ENCODE measurements at regions of chr20 and their contacts with region 1.

Region 1: DNA sequence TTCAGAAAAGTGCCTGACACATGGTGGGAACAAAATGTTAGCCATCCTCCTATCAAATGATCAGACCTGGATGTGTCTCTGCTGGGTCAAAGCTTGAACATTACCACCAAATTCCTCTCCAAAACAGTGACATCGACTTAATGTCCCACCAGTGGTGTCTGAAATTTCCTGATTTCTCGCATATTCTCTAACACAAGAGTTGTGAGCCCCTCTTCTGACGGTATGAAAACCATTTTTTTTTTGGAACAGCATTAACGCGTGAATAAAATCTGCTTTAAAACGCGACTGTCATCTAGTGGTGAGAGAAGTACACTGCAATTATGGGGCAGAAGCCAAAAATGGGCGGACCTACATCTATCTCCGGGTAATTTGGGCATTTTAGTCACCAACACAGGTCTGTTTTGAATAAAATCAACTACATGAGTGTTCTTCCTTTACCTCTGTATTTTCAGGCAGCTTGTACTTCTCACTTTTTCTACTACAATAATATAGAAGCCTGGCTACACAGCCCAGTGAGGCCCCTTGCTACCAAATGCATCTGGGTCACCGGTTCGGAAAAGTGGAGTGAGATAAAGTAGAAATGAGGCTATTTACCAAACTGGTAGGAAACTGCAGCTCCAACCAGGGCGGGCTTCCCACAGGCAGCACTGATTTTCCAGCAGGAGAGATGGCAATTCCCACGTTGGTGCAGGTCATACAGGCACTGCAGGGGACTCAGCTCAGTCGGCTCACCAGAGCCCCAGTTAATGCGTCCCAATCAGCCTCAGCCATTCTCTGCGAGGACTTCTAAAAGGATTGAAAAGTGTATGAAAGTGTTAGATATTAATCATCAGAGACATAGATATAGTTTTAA is 27.4 kb downstream of the MGME1 start:
- DNase-seq: peak; percentile 70
- ATAC-seq: peak; percentile 72
- H3K4me3 ChIP-seq: peak overlapping the region in 2 of 3 experiments; percentile 7 to 30; a peak in 2 of 6 replicates
- H3K27ac ChIP-seq: no peak overlapping the region
- H3K4me1 ChIP-seq: peaks cover 28% of the 10 kb centered on the region
- H3K27me3 ChIP-seq: peaks cover 2 to 23% of the 10 kb centered on the region in 2 experiments; a peak in 1 of 5 replicates
- CTCF ChIP-seq: peak; percentile 96
- EP300 ChIP-seq: no peak
- POLR2A ChIP-seq: no peak
- RAD21 ChIP-seq: peak; percentile 91

Region 2: GRCh38 chr20:17504898-17505635 is 491.1 kb before region 1 on chr20:
- CTCF ChIA-PET with region 1: interaction called, 9 read pairs
- POLR2A ChIA-PET with region 1: no interaction called
- in situ Hi-C with region 1: no loop called
- intact Hi-C with region 1: loop called (anchors 1 kb)
- DNase-seq: peak; percentile 64
- ATAC-seq: peak; percentile 86
- H3K4me3 ChIP-seq: peak overlapping the region; percentile 35 to 74 (median 51)
- H3K27ac ChIP-seq: no peak overlapping the region
- H3K4me1 ChIP-seq: peaks cover 19% of the 10 kb centered on the region
- H3K27me3 ChIP-seq: peaks cover 1 to 74% of the 10 kb centered on the region in 2 experiments; a peak in 4 of 5 replicates
- CTCF ChIP-seq: peak; percentile 79
- EP300 ChIP-seq: no peak
- POLR2A ChIP-seq: no peak
- RAD21 ChIP-seq: peak; percentile 69

Region 3: DNA sequence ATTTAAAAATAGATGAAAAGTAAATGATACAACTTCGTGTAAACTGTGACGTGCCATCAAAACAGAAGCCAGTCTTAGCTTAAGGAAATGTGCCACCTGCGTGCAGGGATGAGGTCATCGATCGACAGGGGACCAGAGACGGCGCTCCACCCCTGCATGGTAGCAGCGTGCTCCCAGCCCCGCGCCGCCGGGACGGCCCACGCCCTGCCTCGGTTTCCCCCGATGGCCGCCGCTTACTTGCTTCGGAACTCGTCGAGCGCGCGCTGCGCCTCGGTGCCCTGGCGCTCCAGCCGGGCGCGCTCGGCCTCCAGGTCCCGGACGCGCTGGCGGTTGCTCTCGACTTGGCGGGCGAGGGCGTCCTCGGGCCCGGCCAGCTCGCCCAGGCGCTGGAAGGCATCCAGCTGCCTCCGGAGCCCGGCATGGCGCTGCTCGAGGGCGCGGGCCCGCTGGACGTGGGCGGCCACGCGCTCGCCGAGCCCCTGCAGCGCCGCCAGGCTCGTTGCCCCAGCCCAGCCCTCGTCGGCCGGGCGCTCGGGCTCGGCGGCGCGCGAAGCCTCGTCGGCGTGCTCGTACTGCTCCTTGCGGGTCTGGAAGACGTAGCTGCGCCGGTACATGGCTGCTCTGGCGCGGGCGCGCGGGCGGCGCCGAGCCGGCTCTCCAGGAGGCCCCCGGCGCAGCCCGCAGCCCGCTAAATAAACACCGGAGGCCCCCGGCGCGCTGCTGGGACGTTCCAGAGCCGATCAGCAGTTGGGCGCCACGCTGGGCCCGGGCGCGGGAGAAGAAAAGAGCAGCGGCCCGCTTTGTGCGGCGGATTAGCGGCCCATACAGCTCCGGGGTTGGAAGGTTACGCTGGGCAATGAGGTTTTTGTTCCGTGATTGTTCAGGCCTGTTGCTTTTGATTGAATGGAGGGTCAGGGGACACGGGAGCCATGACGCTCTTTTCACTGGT is 465.2 kb before region 1 on chr20 and contains the start of gene BFSP1:
- CTCF ChIA-PET with region 1: no interaction called
- POLR2A ChIA-PET with region 1: no interaction called
- in situ Hi-C with region 1: no loop called
- intact Hi-C with region 1: loop called (anchors 5 kb)
- DNase-seq: peak; percentile 55
- ATAC-seq: peak; percentile 91
- H3K4me3 ChIP-seq: peak within 1 kb of the TSS; percentile 41 to 67 (median 49)
- H3K27ac ChIP-seq: no peak within 1 kb of the TSS
- H3K4me1 ChIP-seq: peaks cover 27% of the 10 kb centered on the region
- H3K27me3 ChIP-seq: peaks cover 0 to 10% of the 10 kb centered on the region in 2 experiments; a peak in 2 of 5 replicates
- CTCF ChIP-seq: peak; percentile 20; the same call in 1 of the 2 replicates
- EP300 ChIP-seq: peak in 1 of 2 experiments; percentile 34; a peak in 1 of 4 replicates
- POLR2A ChIP-seq: peak in 1 of 2 experiments; percentile 36; a peak in 1 of 4 replicates
- RAD21 ChIP-seq: peak; percentile 37; the same call in 1 of the 2 replicates
- total RNA-seq, gene BFSP1: 0.22 and 0.36 TPM in 2 replicates

Region 4: DNA sequence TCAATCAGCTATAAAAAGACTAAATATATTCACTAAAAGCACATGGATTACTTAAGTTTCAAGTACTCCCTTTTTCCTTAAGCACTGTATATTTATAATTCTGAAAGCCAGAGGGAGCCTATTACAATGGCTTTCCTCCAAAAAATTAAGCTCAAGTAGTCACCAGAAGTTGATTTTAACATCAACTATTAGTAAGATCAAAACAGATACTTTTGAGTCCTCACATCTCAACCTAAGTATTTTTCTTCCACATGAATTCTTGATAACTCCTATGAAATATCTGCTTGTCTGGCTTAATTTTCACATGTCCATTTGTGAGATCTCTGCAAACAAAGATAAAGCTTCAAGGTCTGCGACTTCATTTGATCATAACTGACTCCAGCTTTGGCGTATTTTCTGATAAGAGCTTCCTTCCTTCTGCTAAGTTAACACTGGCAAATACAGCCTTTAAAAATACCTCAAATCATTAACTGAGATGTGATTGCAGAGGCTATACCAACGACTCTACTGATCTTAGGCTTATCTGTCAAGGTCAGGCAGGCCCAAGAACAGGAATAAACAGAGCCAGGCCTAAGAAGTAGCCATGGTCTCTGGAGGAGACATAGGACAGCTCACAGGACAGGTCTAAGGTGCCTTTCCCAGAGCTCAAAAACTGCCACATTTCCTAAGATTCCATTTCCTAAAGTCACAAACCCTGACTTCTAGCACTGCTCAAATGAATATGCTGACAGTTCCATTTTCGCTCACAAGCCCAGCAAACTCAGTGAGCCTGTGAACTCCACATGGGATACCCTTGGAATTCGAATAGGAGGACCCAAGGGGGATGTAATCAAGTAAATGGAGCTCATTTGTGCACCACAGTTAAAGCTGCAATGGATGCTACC is 37.6 kb before region 1 on chr20:
- CTCF ChIA-PET with region 1: interaction called, 4 read pairs
- POLR2A ChIA-PET with region 1: interaction called, 3 read pairs
- in situ Hi-C with region 1: no loop called
- intact Hi-C with region 1: loop called (anchors 2 kb)
- DNase-seq: peak; percentile 88
- ATAC-seq: peak; percentile 17
- H3K4me3 ChIP-seq: peak overlapping the region; percentile 11 to 58 (median 18); a peak in 5 of 6 replicates
- H3K27ac ChIP-seq: peak overlapping the region; percentile 97
- H3K4me1 ChIP-seq: peaks cover 100% of the 10 kb centered on the region
- H3K27me3 ChIP-seq: no peaks in the 10 kb centered on the region
- CTCF ChIP-seq: no peak
- EP300 ChIP-seq: peak in 1 of 2 experiments; percentile 88; a peak in 2 of 4 replicates
- POLR2A ChIP-seq: peak; percentile 43 to 54; a peak in 3 of 4 replicates
- RAD21 ChIP-seq: no peak

Region 5: GRCh38 chr20:17968366-17969279 is 27.6 kb before region 1 on chr20 and contains the starts of genes MGME1 and SNX5:
- CTCF ChIA-PET with region 1: interaction called, 4 read pairs
- POLR2A ChIA-PET with region 1: interaction called, 3 read pairs
- in situ Hi-C with region 1: no loop called
- intact Hi-C with region 1: loop called (anchors 1 kb)
- DNase-seq: peak; percentile 100
- ATAC-seq: peak; percentile 93
- H3K4me3 ChIP-seq: peak within 1 kb of the TSS; percentile 89 to 95 (median 89)
- H3K27ac ChIP-seq: peak within 1 kb of the TSS; percentile 97
- H3K4me1 ChIP-seq: peaks cover 52% of the 10 kb centered on the region
- H3K27me3 ChIP-seq: no peaks in the 10 kb centered on the region; a peak in 1 of 5 replicates
- CTCF ChIP-seq: peak; percentile 23
- EP300 ChIP-seq: peak; percentile 69 to 84; a peak in 3 of 4 replicates
- POLR2A ChIP-seq: peak; percentile 100
- RAD21 ChIP-seq: peak; percentile 74
- total RNA-seq, gene MGME1: 66.6 and 79.5 TPM in 2 replicates
- total RNA-seq, gene SNX5: 1,040 and 1,306 TPM in 2 replicates